ENCODE measurements at regions of chr6 and their contacts with region 1.

Region 1: GRCh38 chr6:152124429-152125074 is 317.1 kb downstream of the ESR1 start:
- DNase-seq: no peak
- H3K4me3 ChIP-seq: no peak overlapping the region
- H3K27ac ChIP-seq: no peak overlapping the region
- H3K4me1 ChIP-seq: peaks cover 0 to 3% (median 0%) of the 10 kb centered on the region in 4 donors
- H3K27me3 ChIP-seq: no peaks in the 10 kb centered on the region
- CTCF ChIP-seq: peak; percentile 45 to 68 (median 64)
- EP300 ChIP-seq: no peak
- POLR2A ChIP-seq: no peak

Region 2: GRCh38 chr6:151675746-151676416 is 448.7 kb before region 1 on chr6:
- in situ Hi-C with region 1: loop called in 2 of 4 experiments (anchors 25 kb)
- intact Hi-C with region 1: no loop called
- DNase-seq: peak; percentile 54
- H3K4me3 ChIP-seq: no peak overlapping the region
- H3K27ac ChIP-seq: no peak overlapping the region
- H3K4me1 ChIP-seq: no peaks in the 10 kb centered on the region
- H3K27me3 ChIP-seq: no peaks in the 10 kb centered on the region
- CTCF ChIP-seq: peak; percentile 64 to 83 (median 67)
- EP300 ChIP-seq: no peak
- POLR2A ChIP-seq: no peak

Region 3: DNA sequence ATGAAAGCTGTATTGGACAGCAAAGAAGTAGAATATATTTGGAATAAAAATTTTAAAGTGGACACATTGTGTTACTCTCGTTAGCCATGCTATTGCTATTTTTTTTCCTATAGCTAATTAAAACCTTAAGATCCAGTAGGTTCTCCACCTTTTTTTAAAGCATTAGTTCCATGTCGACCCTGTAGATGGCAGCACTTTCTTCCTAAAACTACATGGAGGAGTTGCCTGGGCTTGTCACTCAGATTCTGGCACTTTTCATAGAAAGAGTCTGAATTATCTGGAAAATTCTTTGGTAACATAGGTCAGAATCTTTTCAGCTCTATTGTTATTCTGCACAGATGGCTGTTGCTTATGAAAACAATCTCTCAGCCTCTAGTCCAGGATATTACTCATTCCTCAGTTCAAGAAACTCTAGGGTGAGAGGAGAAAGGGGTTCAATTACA is 359.1 kb before region 1 on chr6:
- in situ Hi-C with region 1: loop called in 1 of 4 experiments (anchors 10 kb)
- intact Hi-C with region 1: no loop called
- DNase-seq: peak; percentile 23
- H3K4me3 ChIP-seq: no peak overlapping the region
- H3K27ac ChIP-seq: no peak overlapping the region
- H3K4me1 ChIP-seq: peaks cover 0 to 4% (median 0%) of the 10 kb centered on the region in 4 donors
- H3K27me3 ChIP-seq: no peaks in the 10 kb centered on the region
- CTCF ChIP-seq: peak; percentile 38 to 69 (median 67)
- EP300 ChIP-seq: no peak
- POLR2A ChIP-seq: no peak

Region 4: GRCh38 chr6:152380993-152381898 is 256.7 kb after region 1 on chr6:
- in situ Hi-C with region 1: no loop called
- intact Hi-C with region 1: no loop called
- DNase-seq: peak; percentile 53
- H3K4me3 ChIP-seq: peak overlapping the region; percentile 13 to 38 (median 30)
- H3K27ac ChIP-seq: peak overlapping the region; percentile 83 to 89 (median 84)
- H3K4me1 ChIP-seq: no peaks in the 10 kb centered on the region
- H3K27me3 ChIP-seq: no peaks in the 10 kb centered on the region
- CTCF ChIP-seq: no peak
- EP300 ChIP-seq: peak; percentile 29
- POLR2A ChIP-seq: peak; percentile 76

Region 5: GRCh38 chr6:152575621-152576150 is 451.1 kb after region 1 on chr6:
- in situ Hi-C with region 1: no loop called
- intact Hi-C with region 1: no loop called
- DNase-seq: no peak
- H3K4me3 ChIP-seq: no peak overlapping the region
- H3K27ac ChIP-seq: no peak overlapping the region
- H3K4me1 ChIP-seq: no peaks in the 10 kb centered on the region
- H3K27me3 ChIP-seq: no peaks in the 10 kb centered on the region
- CTCF ChIP-seq: no peak
- EP300 ChIP-seq: no peak
- POLR2A ChIP-seq: no peak